A673 (cell line): ENCODE measurements at regions of chr20 and their contacts with region 1.

Region 1: DNA sequence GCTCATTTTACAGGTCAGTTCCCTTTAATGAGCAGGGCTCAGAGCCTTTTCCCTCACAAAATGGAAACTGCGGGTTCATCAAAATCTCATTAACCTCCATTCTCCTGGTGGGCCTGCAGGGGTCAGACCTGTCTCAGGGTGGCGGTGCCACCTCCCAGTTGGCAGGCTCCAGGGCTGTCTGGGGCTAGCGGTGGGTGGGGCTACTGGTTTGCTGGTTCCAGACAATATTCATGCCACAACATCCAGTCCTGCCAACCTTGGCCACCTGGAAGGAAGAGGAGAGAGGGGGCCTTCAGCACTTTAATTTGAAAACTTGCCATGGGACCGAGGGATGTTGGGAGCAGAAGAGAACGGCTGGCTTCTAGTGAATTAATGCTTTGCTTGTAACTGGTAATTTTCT is 41.9 kb upstream of the CTNNBL1 start:
- DNase-seq: peak; percentile 67
- H3K4me3 ChIP-seq: no peak overlapping the region
- H3K27ac ChIP-seq: no peak overlapping the region
- H3K4me1 ChIP-seq: no peaks in the 10 kb centered on the region
- H3K27me3 ChIP-seq: no peaks in the 10 kb centered on the region
- CTCF ChIP-seq: peak; percentile 65

Region 2: GRCh38 chr20:37715003-37715672 is 63.2 kb after region 1 on chr20:
- CTCF ChIA-PET with region 1: no interaction called
- POLR2A ChIA-PET with region 1: no interaction called
- intact Hi-C with region 1: no loop called
- DNase-seq: peak; percentile 18
- H3K4me3 ChIP-seq: no peak overlapping the region
- H3K27ac ChIP-seq: no peak overlapping the region
- H3K4me1 ChIP-seq: peaks cover 6% of the 10 kb centered on the region
- H3K27me3 ChIP-seq: no peaks in the 10 kb centered on the region
- CTCF ChIP-seq: no peak

Region 3: GRCh38 chr20:37984018-37984785 is 332.3 kb after region 1 on chr20:
- CTCF ChIA-PET with region 1: no interaction called
- POLR2A ChIA-PET with region 1: interaction called, 5 read pairs
- intact Hi-C with region 1: loop called (anchors 5 kb)
- DNase-seq: no peak
- H3K4me3 ChIP-seq: no peak overlapping the region
- H3K27ac ChIP-seq: no peak overlapping the region
- H3K4me1 ChIP-seq: peaks cover 13% of the 10 kb centered on the region
- H3K27me3 ChIP-seq: no peaks in the 10 kb centered on the region
- CTCF ChIP-seq: no peak